GM12878 (cell line): ENCODE measurements at regions of chr3 and their contacts with region 1.

Region 1: GRCh38 chr3:115092220-115092791 is 54.8 kb downstream of the ZBTB20 start:
- DNase-seq: peak; percentile 26
- ATAC-seq: peak; percentile 81
- H3K4me3 ChIP-seq: no peak overlapping the region
- H3K27ac ChIP-seq: no peak overlapping the region
- H3K4me1 ChIP-seq: no peaks in the 10 kb centered on the region
- H3K27me3 ChIP-seq: no peaks in the 10 kb centered on the region
- CTCF ChIP-seq: peak; percentile 78 to 82 (median 78)
- EP300 ChIP-seq: no peak
- POLR2A ChIP-seq: no peak
- RAD21 ChIP-seq: peak; percentile 93

Region 2: DNA sequence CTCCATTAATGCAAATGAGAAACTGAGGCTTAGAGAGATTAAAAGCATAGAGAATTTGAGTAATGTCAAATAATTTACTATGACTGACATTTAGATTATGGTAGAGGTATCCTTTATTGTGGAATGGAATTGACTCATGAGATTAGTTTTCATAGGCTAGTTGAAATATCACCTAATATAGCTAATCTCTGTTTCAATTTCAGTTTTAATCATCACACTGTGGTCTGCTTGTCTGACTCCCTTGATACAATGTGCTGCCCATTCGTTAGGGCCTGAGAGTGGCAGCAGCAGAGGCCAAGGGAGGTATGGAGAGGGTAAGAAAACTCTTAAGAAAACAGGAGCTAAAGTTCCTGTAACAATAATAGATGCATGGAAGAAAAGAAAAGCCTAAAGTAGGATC is 68.0 kb after region 1 on chr3:
- CTCF ChIA-PET with region 1: interaction called, 67 read pairs
- POLR2A ChIA-PET with region 1: no interaction called
- RAD21 ChIA-PET with region 1: interaction called, 5 read pairs
- SMC1A ChIA-PET with region 1: interaction called, 16 read pairs
- in situ Hi-C with region 1: loop called (anchors 5 kb)
- intact Hi-C with region 1: no loop called
- DNase-seq: peak; percentile 55
- ATAC-seq: peak; percentile 100
- H3K4me3 ChIP-seq: no peak overlapping the region
- H3K27ac ChIP-seq: no peak overlapping the region
- H3K4me1 ChIP-seq: peaks cover 6% of the 10 kb centered on the region
- H3K27me3 ChIP-seq: no peaks in the 10 kb centered on the region
- CTCF ChIP-seq: no peak
- EP300 ChIP-seq: 0 out of 4 replicates have a peak, but pooled peaks of 1 of the 2 experiments have one; percentile 34
- POLR2A ChIP-seq: no peak
- RAD21 ChIP-seq: no peak

Region 3: GRCh38 chr3:115187149-115187757 is 94.9 kb after region 1 on chr3:
- CTCF ChIA-PET with region 1: interaction called, 7 read pairs
- POLR2A ChIA-PET with region 1: no interaction called
- RAD21 ChIA-PET with region 1: no interaction called
- SMC1A ChIA-PET with region 1: interaction called, 13 read pairs
- in situ Hi-C with region 1: no loop called
- intact Hi-C with region 1: no loop called
- DNase-seq: peak; percentile 73
- ATAC-seq: peak; percentile 100
- H3K4me3 ChIP-seq: peak overlapping the region; percentile 49
- H3K27ac ChIP-seq: peak overlapping the region; percentile 78
- H3K4me1 ChIP-seq: peaks cover 18% of the 10 kb centered on the region
- H3K27me3 ChIP-seq: no peaks in the 10 kb centered on the region
- CTCF ChIP-seq: no peak
- EP300 ChIP-seq: peak in 1 of 2 experiments; percentile 59; a peak in 3 of 4 replicates
- POLR2A ChIP-seq: no peak
- RAD21 ChIP-seq: no peak

Region 4: GRCh38 chr3:115227461-115227860 is 135.2 kb after region 1 on chr3:
- CTCF ChIA-PET with region 1: no interaction called
- POLR2A ChIA-PET with region 1: no interaction called
- RAD21 ChIA-PET with region 1: no interaction called
- SMC1A ChIA-PET with region 1: no interaction called
- in situ Hi-C with region 1: no loop called
- intact Hi-C with region 1: no loop called
- DNase-seq: no peak
- ATAC-seq: no peak
- H3K4me3 ChIP-seq: no peak overlapping the region
- H3K27ac ChIP-seq: no peak overlapping the region
- H3K4me1 ChIP-seq: no peaks in the 10 kb centered on the region
- H3K27me3 ChIP-seq: no peaks in the 10 kb centered on the region; a peak in 1 of 4 replicates
- CTCF ChIP-seq: no peak
- EP300 ChIP-seq: no peak
- POLR2A ChIP-seq: no peak
- RAD21 ChIP-seq: no peak

Region 5: GRCh38 chr3:115402651-115403050 is 310.3 kb after region 1 on chr3:
- CTCF ChIA-PET with region 1: no interaction called
- POLR2A ChIA-PET with region 1: no interaction called
- RAD21 ChIA-PET with region 1: no interaction called
- SMC1A ChIA-PET with region 1: no interaction called
- in situ Hi-C with region 1: no loop called
- intact Hi-C with region 1: no loop called
- DNase-seq: no peak
- ATAC-seq: no peak
- H3K4me3 ChIP-seq: no peak overlapping the region
- H3K27ac ChIP-seq: no peak overlapping the region
- H3K4me1 ChIP-seq: no peaks in the 10 kb centered on the region
- H3K27me3 ChIP-seq: no peaks in the 10 kb centered on the region
- CTCF ChIP-seq: no peak
- EP300 ChIP-seq: no peak
- POLR2A ChIP-seq: no peak
- RAD21 ChIP-seq: no peak

Region 6: GRCh38 chr3:115783938-115784738 is 691.8 kb after region 1 on chr3:
- CTCF ChIA-PET with region 1: interaction called, 5 read pairs
- POLR2A ChIA-PET with region 1: no interaction called
- RAD21 ChIA-PET with region 1: interaction called, 4 read pairs
- SMC1A ChIA-PET with region 1: interaction called, 3 read pairs
- in situ Hi-C with region 1: no loop called
- intact Hi-C with region 1: loop called (anchors 1 kb)
- DNase-seq: peak; percentile 15
- ATAC-seq: peak; percentile 94
- H3K4me3 ChIP-seq: peak overlapping the region; percentile 59; the same call in 1 of the 2 replicates
- H3K27ac ChIP-seq: no peak overlapping the region
- H3K4me1 ChIP-seq: no peaks in the 10 kb centered on the region; the same call in 1 of the 2 replicates
- H3K27me3 ChIP-seq: peaks cover 0 to 3% of the 10 kb centered on the region in 2 experiments; a peak in 1 of 4 replicates
- CTCF ChIP-seq: peak; percentile 96 to 98 (median 96)
- EP300 ChIP-seq: no peak
- POLR2A ChIP-seq: peak; percentile 62; the same call in 1 of the 2 replicates
- RAD21 ChIP-seq: peak; percentile 65